CD8-positive, alpha-beta memory T cell (primary cell): ENCODE measurements at regions of chr19 and their contacts with region 1.

Region 1: GRCh38 chr19:45306518-45307027 is 16.1 kb downstream of the CKM start:
- DNase-seq: no peak
- H3K4me3 ChIP-seq: no peak overlapping the region
- H3K4me3 Mint-ChIP-seq: no peak overlapping the region
- H3K27ac ChIP-seq: no peak overlapping the region
- H3K27ac Mint-ChIP-seq: no peak overlapping the region
- H3K4me1 ChIP-seq: no peaks in the 10 kb centered on the region
- H3K4me1 Mint-ChIP-seq: peaks cover 0 to 2% (median 0%) of the 10 kb centered on the region in 3 donors
- H3K27me3 ChIP-seq: no peaks in the 10 kb centered on the region
- H3K27me3 Mint-ChIP-seq: peaks cover 0 to 2% of the 10 kb centered on the region in 2 donors

Region 2: GRCh38 chr19:45295873-45296272 is 10.7 kb before region 1 on chr19:
- CTCF ChIA-PET with region 1: no interaction called
- POLR2A ChIA-PET with region 1: interaction called, 10 read pairs
- DNase-seq: no peak
- H3K4me3 ChIP-seq: no peak overlapping the region
- H3K4me3 Mint-ChIP-seq: no peak overlapping the region
- H3K27ac ChIP-seq: no peak overlapping the region
- H3K27ac Mint-ChIP-seq: no peak overlapping the region
- H3K4me1 ChIP-seq: no peaks in the 10 kb centered on the region
- H3K4me1 Mint-ChIP-seq: no peaks in the 10 kb centered on the region
- H3K27me3 ChIP-seq: no peaks in the 10 kb centered on the region
- H3K27me3 Mint-ChIP-seq: peaks cover 0 to 2% of the 10 kb centered on the region in 2 donors